Activated CD4-positive, alpha-beta memory T cell treated with anti-CD3 and anti-CD28 coated beads for 36 hours (primary cell): ENCODE measurements at regions of chr2 and their contacts with region 1.

Region 1: GRCh38 chr2:157302492-157303099 is 23.0 kb downstream of the ERMN start:
- DNase-seq: peak; percentile 33
- H3K4me3 Mint-ChIP-seq: no peak overlapping the region
- H3K27ac Mint-ChIP-seq: no peak overlapping the region
- H3K4me1 Mint-ChIP-seq: peaks cover 14% of the 10 kb centered on the region
- H3K27me3 Mint-ChIP-seq: peaks cover 6% of the 10 kb centered on the region

Region 2: DNA sequence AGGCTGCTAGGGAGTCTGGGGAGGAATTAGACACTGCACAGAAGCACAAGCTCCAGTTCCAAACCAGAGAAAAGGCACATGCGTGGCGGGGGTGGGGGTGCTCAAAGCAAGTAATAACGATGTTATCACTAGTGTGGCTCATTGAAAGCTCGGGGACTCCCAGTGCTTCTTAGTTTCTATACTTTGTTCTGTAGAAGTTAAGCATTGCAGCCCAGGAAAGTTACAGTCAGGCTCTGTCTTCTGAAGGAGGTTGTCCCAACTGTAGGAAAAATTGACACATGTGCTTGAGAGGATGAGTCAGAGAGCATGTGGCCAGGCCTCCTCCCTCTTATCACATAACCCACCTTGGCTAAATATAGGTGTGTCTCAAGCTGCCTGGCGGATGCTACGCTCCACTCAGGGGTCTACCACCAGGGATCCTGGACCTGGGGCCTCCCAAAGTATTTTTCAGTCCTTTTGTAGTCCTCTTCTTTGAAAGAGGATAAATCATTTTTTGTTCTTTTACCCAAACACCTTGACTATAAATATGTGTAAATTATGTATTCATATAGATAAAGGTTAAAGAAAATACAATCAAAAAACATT is 41.3 kb before region 1 on chr2:
- CTCF ChIA-PET with region 1: interaction called, 12 read pairs
- POLR2A ChIA-PET with region 1: no interaction called
- intact Hi-C with region 1: no loop called
- DNase-seq: peak; percentile 81
- H3K4me3 Mint-ChIP-seq: no peak overlapping the region
- H3K27ac Mint-ChIP-seq: peak overlapping the region; percentile 18
- H3K4me1 Mint-ChIP-seq: peaks cover 19% of the 10 kb centered on the region
- H3K27me3 Mint-ChIP-seq: peaks cover 5% of the 10 kb centered on the region

Region 3: DNA sequence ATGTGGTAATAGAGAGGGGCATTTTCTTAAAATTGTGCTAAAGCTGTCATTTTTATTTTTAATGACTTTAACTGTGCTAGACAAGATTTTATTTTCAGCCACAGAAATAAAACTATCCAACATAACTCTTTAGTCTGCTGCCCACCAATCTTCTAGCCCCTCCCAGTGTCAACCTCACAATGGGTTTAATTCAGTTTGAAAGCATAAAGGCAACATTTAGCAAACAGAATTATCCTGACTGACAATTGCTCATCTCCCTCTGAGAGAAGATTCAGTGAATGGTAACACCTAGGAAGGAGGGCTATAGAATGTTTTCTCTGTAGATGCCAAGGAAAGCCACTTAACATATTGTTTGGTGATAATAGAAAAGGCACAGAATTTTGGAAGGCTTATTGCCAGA is 17.8 kb after region 1 on chr2:
- CTCF ChIA-PET with region 1: interaction called, 316 read pairs
- POLR2A ChIA-PET with region 1: no interaction called
- intact Hi-C with region 1: no loop called
- DNase-seq: no peak
- H3K4me3 Mint-ChIP-seq: no peak overlapping the region
- H3K27ac Mint-ChIP-seq: no peak overlapping the region
- H3K4me1 Mint-ChIP-seq: peaks cover 6% of the 10 kb centered on the region
- H3K27me3 Mint-ChIP-seq: no peaks in the 10 kb centered on the region

Region 4: DNA sequence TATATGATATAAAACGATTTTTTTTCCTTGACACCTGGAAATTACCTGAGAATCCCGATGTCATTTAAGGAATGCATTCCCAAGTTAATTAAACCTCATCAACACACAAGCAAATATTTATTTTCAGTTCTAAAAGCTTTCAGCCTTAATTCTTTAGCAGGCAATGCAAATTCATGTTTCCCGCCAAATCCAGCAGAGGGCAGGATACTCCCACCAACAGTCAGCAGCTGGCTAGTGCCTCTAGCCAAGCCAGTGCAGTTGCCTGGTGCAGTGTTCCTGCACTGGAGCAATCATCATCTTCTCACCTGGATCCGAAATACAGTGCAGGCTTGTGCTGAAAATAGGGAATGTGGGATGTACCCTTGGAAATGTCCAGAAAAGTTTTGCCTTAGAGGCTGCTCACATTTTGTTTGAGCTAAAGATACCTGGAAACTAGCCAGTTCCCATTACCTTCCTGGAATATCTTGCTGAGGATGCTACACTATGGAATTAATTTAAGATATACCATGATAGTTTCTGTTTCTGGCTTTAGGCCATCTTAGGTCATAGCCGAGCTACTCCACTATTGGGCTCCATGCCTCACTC is 189.7 kb after region 1 on chr2:
- CTCF ChIA-PET with region 1: interaction called, 147 read pairs
- POLR2A ChIA-PET with region 1: no interaction called
- intact Hi-C with region 1: loop called (anchors 2 kb)
- DNase-seq: peak; percentile 83
- H3K4me3 Mint-ChIP-seq: no peak overlapping the region
- H3K27ac Mint-ChIP-seq: no peak overlapping the region
- H3K4me1 Mint-ChIP-seq: peaks cover 55% of the 10 kb centered on the region
- H3K27me3 Mint-ChIP-seq: no peaks in the 10 kb centered on the region

Region 5: DNA sequence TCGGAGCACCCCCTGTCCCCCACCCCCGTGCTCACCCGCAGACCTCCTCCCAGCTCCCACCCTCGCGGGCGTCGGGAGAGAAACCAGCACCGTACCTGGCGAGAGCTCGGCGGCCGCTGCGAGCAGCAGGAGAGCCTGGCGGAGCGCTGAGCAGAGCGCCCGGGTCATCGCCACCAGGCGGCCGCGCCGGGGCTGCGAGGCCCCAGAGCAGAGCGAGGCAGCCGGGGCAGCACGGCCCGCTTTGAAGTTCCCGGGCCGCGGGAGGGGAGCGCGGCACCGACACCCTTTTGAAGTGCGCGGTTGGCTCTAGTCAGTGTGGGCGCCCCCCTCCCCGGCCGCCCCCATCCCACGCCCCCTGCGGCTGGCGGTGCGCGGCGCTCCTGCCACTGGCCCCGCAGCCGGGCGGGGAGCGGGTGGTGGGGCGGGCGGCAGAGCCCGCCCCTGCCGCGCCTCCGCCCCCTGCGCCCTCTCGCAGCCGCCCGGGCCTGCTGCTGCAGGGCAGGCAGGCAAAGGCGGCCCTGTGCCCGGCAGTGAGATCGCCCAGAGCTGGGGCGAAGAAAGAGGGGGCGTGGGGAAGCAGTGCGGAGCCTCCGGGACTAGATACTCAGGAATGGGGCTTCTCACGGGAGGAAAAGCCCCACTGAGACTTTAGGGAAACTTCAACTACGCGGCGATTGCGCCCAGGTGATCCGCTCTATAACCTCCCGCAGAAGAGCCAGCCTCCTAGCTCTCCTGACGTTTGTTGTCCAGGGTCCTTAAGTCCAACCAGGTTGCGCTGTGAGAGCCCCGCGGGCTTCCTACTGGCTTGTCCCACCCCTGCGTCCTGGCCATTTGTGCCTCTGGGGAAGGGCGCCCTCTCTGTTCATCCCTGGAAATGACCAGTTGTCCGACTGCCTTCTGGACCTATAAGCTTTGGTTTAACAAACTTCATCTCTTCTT is 326.1 kb after region 1 on chr2 and contains the start of gene ACVR1C:
- CTCF ChIA-PET with region 1: interaction called, 30 read pairs
- POLR2A ChIA-PET with region 1: interaction called, 3 read pairs
- intact Hi-C with region 1: loop called (anchors 10 kb)
- DNase-seq: peak; percentile 79
- H3K4me3 Mint-ChIP-seq: peak within 1 kb of the TSS; percentile 86
- H3K27ac Mint-ChIP-seq: peak within 1 kb of the TSS; percentile 9
- H3K4me1 Mint-ChIP-seq: peaks cover 31% of the 10 kb centered on the region
- H3K27me3 Mint-ChIP-seq: peaks cover 8% of the 10 kb centered on the region
- total RNA-seq, gene ACVR1C: 1.3 to 2.0 TPM

Region 6: DNA sequence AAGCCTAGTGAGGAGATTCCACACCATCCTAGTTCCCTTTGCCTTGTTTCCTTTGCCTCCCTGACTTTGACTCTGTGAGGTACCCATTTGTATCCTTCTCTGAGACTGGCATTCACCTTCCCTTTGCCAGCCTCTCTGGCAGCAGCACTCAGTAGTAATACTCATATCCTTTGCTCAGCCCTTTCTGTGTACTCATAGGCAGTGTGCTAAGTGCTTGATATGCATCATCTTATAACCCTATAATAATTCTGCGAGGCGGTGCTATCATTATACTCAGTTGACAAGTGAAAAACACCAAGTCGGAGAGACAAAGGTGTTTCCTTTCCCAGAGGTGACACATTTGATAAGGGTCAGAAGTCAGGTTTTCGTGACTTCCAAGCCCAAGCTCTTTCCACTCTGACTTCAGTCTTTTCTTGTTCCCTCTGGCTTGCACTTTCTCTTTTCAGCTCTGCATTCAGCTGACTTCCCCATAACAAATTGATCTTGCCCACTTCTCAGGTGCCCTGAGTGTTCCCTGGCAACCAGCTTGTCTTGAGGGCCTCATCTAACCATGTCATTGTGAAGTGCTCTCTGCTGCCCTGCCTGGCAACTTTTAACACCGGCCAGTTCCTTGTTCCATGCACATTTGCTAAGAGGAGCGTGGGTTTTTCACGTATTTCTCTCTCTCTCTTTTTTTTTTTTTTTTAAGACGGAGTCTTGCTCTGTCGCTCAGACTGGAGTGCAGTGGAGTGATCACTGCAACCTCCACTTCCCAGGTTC is 704.5 kb after region 1 on chr2:
- CTCF ChIA-PET with region 1: interaction called, 19 read pairs
- POLR2A ChIA-PET with region 1: no interaction called
- intact Hi-C with region 1: loop called (anchors 2 kb)
- DNase-seq: peak; percentile 25
- H3K4me3 Mint-ChIP-seq: no peak overlapping the region
- H3K27ac Mint-ChIP-seq: no peak overlapping the region
- H3K4me1 Mint-ChIP-seq: peaks cover 6% of the 10 kb centered on the region
- H3K27me3 Mint-ChIP-seq: peaks cover 2% of the 10 kb centered on the region